ENCODE measurements at regions of chr20 and their contacts with region 1.

Region 1: DNA sequence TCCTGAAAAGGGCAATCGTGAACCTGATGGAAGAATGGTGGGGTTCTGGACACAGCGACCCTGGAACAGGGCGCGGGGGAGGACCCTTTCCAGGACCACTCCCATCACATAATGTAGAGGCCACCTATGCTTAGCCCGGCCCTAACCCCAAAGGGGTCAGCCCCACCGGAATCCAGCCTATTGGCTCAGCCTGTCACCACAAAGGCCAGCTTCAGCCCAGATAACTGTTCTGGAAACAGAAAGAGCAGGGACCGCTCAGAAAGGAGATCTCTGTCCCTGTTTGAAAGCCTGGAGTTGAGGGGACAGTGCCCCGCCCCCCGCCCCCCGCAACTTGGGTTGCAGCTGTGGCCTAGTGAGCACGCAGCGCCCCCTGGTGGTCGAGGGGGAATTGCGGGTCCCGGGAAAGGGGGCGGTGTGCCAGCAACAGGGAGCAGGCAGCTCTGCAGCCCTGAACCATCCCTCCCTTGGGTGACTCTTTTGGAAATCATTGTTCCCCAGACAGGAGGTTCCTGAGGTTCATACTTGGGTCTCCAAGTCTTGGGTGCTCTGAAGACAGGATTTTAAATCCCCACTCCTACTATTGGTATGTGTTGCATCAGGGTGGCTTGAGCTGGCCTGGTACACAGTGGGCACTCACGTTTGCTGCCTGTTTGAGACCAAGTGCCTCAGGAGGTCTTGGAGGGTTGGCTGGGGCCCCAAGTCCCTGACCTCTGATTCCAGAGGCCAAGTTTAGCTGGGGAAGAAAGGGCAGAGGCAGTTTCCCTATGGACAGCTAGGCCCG is 1.5 kb downstream of the SIGLEC1 start:
- H3K4me3 ChIP-seq: no peak overlapping the region
- H3K27ac ChIP-seq: no peak overlapping the region
- H3K4me1 ChIP-seq: no peaks in the 10 kb centered on the region
- CTCF ChIP-seq: peak; percentile 88

Region 2: DNA sequence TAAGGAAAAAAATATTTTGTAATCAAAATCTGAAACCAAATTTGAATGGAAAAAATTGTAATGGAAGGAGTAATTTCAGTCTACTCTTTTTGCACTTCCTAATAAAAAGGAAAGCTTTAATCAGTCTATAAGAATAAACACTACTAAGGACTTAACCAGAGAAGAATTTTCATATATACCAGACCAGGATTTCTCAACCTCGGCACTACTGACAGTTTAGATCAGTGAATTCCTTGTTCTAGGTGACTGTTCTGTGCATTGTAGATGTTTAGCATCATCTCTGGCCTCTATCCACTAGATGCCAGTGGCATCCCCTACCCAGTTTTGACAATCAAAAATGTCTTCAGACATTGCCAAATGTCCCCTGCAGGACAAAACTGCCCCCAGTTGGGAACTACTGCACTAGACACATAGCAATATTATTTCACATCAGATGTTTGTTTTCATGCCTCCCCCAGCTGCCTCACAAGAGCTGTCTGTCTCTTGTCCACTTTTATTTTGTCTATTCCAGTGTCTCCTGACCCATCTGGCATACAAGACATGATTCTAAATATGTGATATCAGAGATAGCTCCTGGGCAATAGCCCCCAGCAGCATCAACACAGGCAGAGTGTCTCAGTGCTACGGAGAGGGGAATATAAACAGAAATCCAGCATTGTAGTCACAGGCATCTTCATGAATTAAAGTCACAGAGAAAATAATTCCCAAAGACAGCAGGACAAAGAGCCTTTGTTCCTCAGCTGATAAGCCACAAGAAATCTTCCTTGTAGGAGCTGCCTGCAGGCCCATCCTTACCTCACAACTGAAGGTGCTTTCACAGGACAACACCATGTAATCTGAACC is 330.4 kb before region 1 on chr20:
- CTCF ChIA-PET with region 1: no interaction called
- POLR2A ChIA-PET with region 1: no interaction called
- H3K4me3 ChIP-seq: no peak overlapping the region
- H3K27ac ChIP-seq: no peak overlapping the region
- H3K4me1 ChIP-seq: no peaks in the 10 kb centered on the region
- CTCF ChIP-seq: no peak

Region 3: GRCh38 chr20:3494223-3494622 is 216.7 kb before region 1 on chr20:
- CTCF ChIA-PET with region 1: no interaction called
- POLR2A ChIA-PET with region 1: no interaction called
- H3K4me3 ChIP-seq: no peak overlapping the region
- H3K27ac ChIP-seq: no peak overlapping the region
- H3K4me1 ChIP-seq: no peaks in the 10 kb centered on the region
- CTCF ChIP-seq: no peak

Region 4: GRCh38 chr20:3670511-3670910 is 40.4 kb before region 1 on chr20:
- CTCF ChIA-PET with region 1: interaction called, 94 read pairs
- POLR2A ChIA-PET with region 1: interaction called, 4 read pairs
- H3K4me3 ChIP-seq: no peak overlapping the region
- H3K27ac ChIP-seq: no peak overlapping the region
- H3K4me1 ChIP-seq: peaks cover 7% of the 10 kb centered on the region; the same call in 1 of the 2 replicates
- CTCF ChIP-seq: peak; percentile 78; the same call in 1 of the 2 replicates

Region 5: GRCh38 chr20:3686867-3687321 is 24.0 kb before region 1 on chr20:
- CTCF ChIA-PET with region 1: interaction called, 26 read pairs
- POLR2A ChIA-PET with region 1: no interaction called
- H3K4me3 ChIP-seq: no peak overlapping the region
- H3K27ac ChIP-seq: no peak overlapping the region
- H3K4me1 ChIP-seq: no peaks in the 10 kb centered on the region; the same call in 1 of the 2 replicates
- CTCF ChIP-seq: no peak

Region 6: DNA sequence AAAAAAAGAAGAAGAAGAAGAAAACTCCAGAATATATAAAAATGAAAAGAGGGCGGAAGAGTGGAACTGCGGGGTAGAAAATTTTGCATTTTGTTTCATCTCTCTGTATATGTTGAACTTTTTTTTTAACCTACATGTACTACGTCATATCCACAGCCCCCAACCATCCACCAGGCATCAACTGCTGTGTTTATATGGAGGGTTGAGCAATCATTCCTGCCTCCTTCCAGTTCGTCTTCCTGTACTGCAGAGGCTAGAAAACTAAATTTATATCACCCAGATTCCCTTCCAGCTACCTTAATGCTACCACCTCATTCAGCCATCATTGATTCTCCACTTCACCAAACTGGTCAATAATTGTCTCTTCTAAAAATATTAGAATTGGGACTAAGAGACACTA is 11.0 kb after region 1 on chr20:
- CTCF ChIA-PET with region 1: interaction called, 17 read pairs
- POLR2A ChIA-PET with region 1: no interaction called
- H3K4me3 ChIP-seq: no peak overlapping the region
- H3K27ac ChIP-seq: no peak overlapping the region
- H3K4me1 ChIP-seq: no peaks in the 10 kb centered on the region; the same call in 1 of the 2 replicates
- CTCF ChIP-seq: no peak

Region 7: DNA sequence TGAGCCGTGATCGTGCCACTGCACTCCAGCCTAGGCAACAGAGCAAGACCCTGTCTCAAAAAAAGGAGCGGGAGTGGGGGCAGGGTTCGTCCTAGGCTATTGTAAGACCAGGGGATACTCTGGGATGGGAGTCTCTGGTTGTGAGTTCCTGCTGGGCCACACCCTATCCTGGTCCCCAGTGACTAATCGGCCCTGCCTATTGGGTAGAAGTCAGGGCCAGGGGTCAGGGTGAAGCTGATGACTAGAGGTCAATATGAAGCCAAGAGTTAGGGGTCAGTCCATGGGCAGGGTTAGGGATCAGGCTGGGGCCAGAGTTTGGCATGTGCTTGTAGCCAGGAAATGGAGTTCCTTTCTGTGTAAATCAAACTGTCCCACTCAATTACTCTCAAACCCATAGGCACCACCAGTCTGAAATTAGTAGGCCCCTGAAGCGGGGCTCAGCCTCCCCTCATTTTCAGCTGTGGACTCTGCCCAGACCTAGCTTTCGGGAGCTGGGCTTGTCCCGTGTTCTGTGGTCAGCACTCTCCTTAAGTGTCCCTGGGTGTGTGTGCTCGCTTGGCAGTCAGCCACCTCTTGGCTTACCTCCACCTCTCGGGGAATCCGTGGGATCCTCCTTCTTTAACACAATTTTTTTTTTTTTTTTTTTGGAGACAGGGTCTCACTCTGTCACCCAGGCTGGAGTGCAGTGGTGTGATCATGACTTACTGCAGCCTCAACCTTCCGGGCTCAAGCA is 23.4 kb after region 1 on chr20:
- CTCF ChIA-PET with region 1: interaction called, 23 read pairs
- POLR2A ChIA-PET with region 1: interaction called, 3 read pairs
- H3K4me3 ChIP-seq: no peak overlapping the region
- H3K27ac ChIP-seq: no peak overlapping the region
- H3K4me1 ChIP-seq: peaks cover 10% of the 10 kb centered on the region; the same call in 1 of the 2 replicates
- CTCF ChIP-seq: no peak

Region 8: GRCh38 chr20:3744806-3745685 is 34.2 kb after region 1 on chr20:
- CTCF ChIA-PET with region 1: interaction called, 26 read pairs
- POLR2A ChIA-PET with region 1: no interaction called
- H3K4me3 ChIP-seq: no peak overlapping the region
- H3K27ac ChIP-seq: no peak overlapping the region
- H3K4me1 ChIP-seq: no peaks in the 10 kb centered on the region
- CTCF ChIP-seq: no peak

Measured in HEK293 (cell line).